ENCODE measurements at regions of chr22 and their contacts with region 1.

Region 1: GRCh38 chr22:40950962-40951794 is at the start of gene RBX1:
- DNase-seq: peak; percentile 99
- H3K4me3 ChIP-seq: peak within 1 kb of the TSS; percentile 95
- H3K27ac ChIP-seq: peak within 1 kb of the TSS; percentile 59
- H3K4me1 ChIP-seq: peaks cover 18% of the 10 kb centered on the region
- CTCF ChIP-seq: no peak
- total RNA-seq, gene RBX1: 77.3 and 83.6 TPM in 2 replicates

Region 2: GRCh38 chr22:41022470-41023298 is 71.5 kb after region 1 on chr22:
- CTCF ChIA-PET with region 1: no interaction called
- POLR2A ChIA-PET with region 1: interaction called, 6 read pairs
- intact Hi-C with region 1: loop called (anchors 5 kb)
- DNase-seq: peak; percentile 92
- H3K4me3 ChIP-seq: peak overlapping the region; percentile 87
- H3K27ac ChIP-seq: peak overlapping the region; percentile 81
- H3K4me1 ChIP-seq: peaks cover 22% of the 10 kb centered on the region
- CTCF ChIP-seq: no peak

Region 3: GRCh38 chr22:41070665-41071331 is 119.6 kb after region 1 on chr22:
- CTCF ChIA-PET with region 1: no interaction called
- POLR2A ChIA-PET with region 1: no interaction called
- intact Hi-C with region 1: loop called (anchors 1 kb)
- DNase-seq: no peak
- H3K4me3 ChIP-seq: no peak overlapping the region
- H3K27ac ChIP-seq: peak overlapping the region; percentile 45
- H3K4me1 ChIP-seq: peaks cover 50% of the 10 kb centered on the region
- CTCF ChIP-seq: no peak

Region 4: DNA sequence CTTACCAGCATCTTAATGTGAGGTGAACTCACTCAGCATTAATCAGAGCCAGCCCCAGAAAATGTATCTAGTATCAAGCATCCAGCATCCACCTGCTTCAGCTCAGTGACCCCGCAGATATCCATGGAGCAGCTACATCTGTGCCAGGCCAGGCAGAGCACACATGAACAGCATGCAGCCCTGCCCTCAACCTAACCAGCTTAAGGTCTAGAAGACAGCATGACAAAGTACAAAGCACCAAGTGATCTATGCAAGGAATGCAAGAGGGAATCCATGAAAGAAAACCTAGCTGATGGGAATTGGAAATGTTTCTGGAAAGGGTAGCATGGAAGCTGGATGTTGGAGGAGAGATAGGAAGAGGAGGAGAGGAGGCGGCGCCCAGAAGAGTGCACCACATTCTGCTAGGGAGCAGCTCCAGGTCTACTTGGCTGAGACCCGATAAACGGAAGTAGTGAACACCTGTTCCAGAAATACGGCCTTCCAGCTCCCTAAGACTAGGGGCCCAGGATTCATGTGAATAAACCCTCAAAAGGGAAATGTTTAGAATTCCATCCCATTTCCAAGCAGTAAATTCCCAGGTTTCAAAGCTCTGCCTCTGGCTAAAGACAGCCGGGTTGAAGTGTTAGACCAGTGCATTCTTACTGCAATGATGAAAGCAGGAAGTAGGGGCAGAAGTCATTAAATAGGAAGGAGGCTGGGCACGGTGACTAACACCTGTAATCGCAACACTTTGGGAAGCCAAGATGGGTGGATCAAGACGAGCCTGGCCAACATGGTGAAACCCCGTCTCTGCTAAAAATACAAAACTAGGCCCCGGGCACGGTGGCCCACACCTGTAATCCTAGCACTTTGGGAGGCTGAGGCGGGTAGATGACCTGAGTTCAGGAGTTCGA is 230.4 kb after region 1 on chr22:
- CTCF ChIA-PET with region 1: no interaction called
- POLR2A ChIA-PET with region 1: no interaction called
- intact Hi-C with region 1: loop called (anchors 10 kb)
- DNase-seq: no peak
- H3K4me3 ChIP-seq: no peak overlapping the region
- H3K27ac ChIP-seq: no peak overlapping the region
- H3K4me1 ChIP-seq: no peaks in the 10 kb centered on the region
- CTCF ChIP-seq: no peak